ENCODE measurements at regions of chr13 and their contacts with region 1.

Region 1: GRCh38 chr13:36131222-36131930 is at the start of gene DCLK1:
- DNase-seq: peak; percentile 93
- total RNA-seq, gene DCLK1: 64.4 to 112 TPM

Region 2: DNA sequence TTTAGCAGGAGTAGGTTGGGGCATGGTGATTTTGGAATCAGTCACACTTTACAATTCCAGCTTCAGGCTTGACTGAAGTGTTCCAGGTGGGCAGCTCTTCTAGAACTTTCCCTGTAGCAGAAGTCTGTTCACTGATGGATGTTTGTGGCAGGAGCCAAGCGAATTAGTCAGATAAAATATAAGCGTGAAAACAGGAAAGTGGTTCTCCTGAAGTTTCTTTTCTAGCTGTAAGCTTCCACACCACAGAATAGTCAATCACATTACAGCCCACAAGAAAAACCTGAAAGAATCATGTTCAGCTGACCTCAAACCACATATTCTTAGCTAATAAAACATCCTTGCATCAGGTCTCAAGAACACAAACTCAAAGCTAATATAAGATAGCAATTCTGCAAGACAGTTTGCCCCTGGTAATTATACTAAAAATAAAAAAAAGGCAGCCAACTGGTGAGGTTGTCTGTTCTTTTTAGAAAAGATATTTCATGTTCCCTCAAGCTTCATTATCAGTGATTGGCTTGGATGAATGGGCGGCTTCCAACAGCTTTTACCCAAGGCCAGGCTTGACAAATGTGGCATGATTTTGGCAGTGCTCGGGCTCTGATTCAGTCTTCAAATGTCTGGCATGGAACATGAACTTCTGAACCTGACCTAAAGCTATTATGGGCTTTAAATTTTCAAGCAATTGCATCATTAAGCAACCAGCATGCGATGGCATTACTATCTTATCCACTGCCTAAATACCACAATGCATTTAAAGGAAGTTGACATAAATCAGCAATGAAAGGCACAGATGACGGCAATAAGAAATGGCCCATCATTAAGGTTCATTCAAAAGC is 137.0 kb before region 1 on chr13:
- intact Hi-C with region 1: loop called in 1 of 2 experiments (anchors 10 kb)
- DNase-seq: no peak

Region 3: GRCh38 chr13:36088014-36088413 is 43.4 kb before region 1 on chr13:
- intact Hi-C with region 1: no loop called
- DNase-seq: no peak